Left ventricle myocardium superior (tissue), 1 donor: ENCODE measurements at regions of chr4 and their contacts with region 1.

Region 1: GRCh38 chr4:183471946-183472708 is 27.7 kb downstream of the CDKN2AIP start:
- DNase-seq: peak; percentile 90
- ATAC-seq: peak; percentile 88

Region 2: GRCh38 chr4:183602557-183603027 is 130.5 kb after region 1 on chr4:
- intact Hi-C with region 1: loop called (anchors 10 kb)
- DNase-seq: no peak
- ATAC-seq: no peak